Heart left ventricle (tissue), 16 donors: ENCODE measurements at regions of chr5 and their contacts with region 1.

Region 1: GRCh38 chr5:139256820-139257219 is 36.7 kb upstream of the MATR3 start:
- DNase-seq: no peak
- ATAC-seq: no peak
- H3K4me3 ChIP-seq: no peak overlapping the region
- H3K27ac ChIP-seq: no peak overlapping the region
- H3K4me1 ChIP-seq: peaks cover 0 to 2% (median 0%) of the 10 kb centered on the region in 12 donors
- H3K27me3 ChIP-seq: no peaks in the 10 kb centered on the region
- CTCF ChIP-seq: no peak
- POLR2A ChIP-seq: no peak

Region 2: GRCh38 chr5:139091439-139092156 is 165.2 kb before region 1 on chr5:
- intact Hi-C with region 1: loop called (anchors 1 to 10 kb)
- DNase-seq: no peak
- ATAC-seq: peak; percentile 83 to 92 (median 86)
- H3K4me3 ChIP-seq: no peak overlapping the region
- H3K27ac ChIP-seq: peak overlapping the region in 1 of 12 donors; percentile 2
- H3K4me1 ChIP-seq: peaks cover 0 to 13% (median 2%) of the 10 kb centered on the region in 12 donors
- H3K27me3 ChIP-seq: no peaks in the 10 kb centered on the region
- CTCF ChIP-seq: peak in 11 of 12 donors; percentile 20 to 63 (median 46)
- POLR2A ChIP-seq: no peak